ENCODE measurements at regions of chr19 and their contacts with region 1.

Region 1: GRCh38 chr19:17107525-17108452 is 32.2 kb downstream of the MYO9B start:
- DNase-seq: peak; percentile 83
- H3K4me3 ChIP-seq: peak overlapping the region; percentile 15; the same call in 1 of the 2 replicates
- H3K27ac ChIP-seq: peak overlapping the region; percentile 90
- H3K27me3 ChIP-seq: no peaks in the 10 kb centered on the region
- CTCF ChIP-seq: no peak

Region 2: GRCh38 chr19:16888629-16889365 is 219.0 kb before region 1 on chr19 and contains the start of gene F2RL3:
- CTCF ChIA-PET with region 1: no interaction called
- POLR2A ChIA-PET with region 1: no interaction called
- DNase-seq: no peak
- H3K4me3 ChIP-seq: no peak within 1 kb of the TSS
- H3K27ac ChIP-seq: no peak within 1 kb of the TSS
- H3K27me3 ChIP-seq: peaks cover 2% of the 10 kb centered on the region
- CTCF ChIP-seq: no peak
- polyA plus RNA-seq, gene F2RL3: not detected in 2 replicates

Region 3: GRCh38 chr19:17088552-17088951 is 19.2 kb before region 1 on chr19:
- CTCF ChIA-PET with region 1: no interaction called
- POLR2A ChIA-PET with region 1: interaction called, 14 read pairs
- DNase-seq: no peak
- H3K4me3 ChIP-seq: no peak overlapping the region
- H3K27ac ChIP-seq: peak overlapping the region; percentile 99
- H3K27me3 ChIP-seq: no peaks in the 10 kb centered on the region
- CTCF ChIP-seq: no peak

Region 4: DNA sequence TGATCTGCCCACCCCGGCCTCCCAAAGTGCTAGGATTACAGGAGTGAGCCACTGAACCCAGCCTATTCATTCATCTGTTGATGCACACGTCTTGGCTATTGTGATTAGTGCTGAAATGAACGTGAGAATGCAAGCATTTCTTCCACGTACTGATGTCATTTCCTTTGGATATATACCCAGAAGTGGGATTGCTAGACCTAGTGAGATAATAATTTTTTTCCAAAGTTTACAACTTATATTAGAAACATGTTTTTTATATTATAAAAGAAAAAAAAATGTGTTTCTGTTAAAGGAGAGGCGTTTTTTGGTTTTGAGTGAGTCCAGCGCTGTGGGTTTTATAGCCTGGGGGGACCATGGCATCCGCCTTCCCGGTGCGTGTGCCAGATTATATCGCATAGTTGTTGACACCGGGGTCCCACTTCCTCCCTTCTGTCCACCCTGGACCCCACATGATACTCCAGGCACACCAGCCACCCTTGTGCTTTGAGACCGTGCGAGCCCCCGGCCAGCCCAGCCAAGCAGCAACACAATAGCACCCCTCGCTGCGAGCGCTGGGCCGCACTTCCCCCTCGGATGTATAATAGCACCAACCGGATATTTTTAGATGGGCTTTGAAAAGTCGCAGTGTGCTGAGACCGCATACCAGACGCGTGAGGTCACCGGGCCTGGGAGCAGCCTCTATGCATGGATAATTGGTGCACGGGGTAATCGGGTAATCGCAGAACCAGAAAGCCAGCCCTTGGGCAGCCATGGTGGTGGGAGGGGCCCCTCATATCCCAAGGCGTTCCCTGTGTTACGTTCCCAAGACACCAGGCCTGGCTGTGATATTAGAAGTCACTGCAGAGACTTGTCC is 27.4 kb after region 1 on chr19:
- CTCF ChIA-PET with region 1: no interaction called
- POLR2A ChIA-PET with region 1: interaction called, 10 read pairs
- DNase-seq: peak; percentile 89
- H3K4me3 ChIP-seq: peak overlapping the region; percentile 48
- H3K27ac ChIP-seq: peak overlapping the region; percentile 98
- H3K27me3 ChIP-seq: no peaks in the 10 kb centered on the region
- CTCF ChIP-seq: peak; percentile 39

Region 5: GRCh38 chr19:17149393-17150135 is 41.8 kb after region 1 on chr19:
- CTCF ChIA-PET with region 1: no interaction called
- POLR2A ChIA-PET with region 1: no interaction called
- DNase-seq: no peak
- H3K4me3 ChIP-seq: no peak overlapping the region
- H3K27ac ChIP-seq: no peak overlapping the region
- H3K27me3 ChIP-seq: no peaks in the 10 kb centered on the region
- CTCF ChIP-seq: no peak